Dendritic cell treated with granulocyte-macrophage colony-stimulating factor and Interleukin-4, amounts not matched to agents 40 ng/mL and 50 ng/mL, for 4 days (primary cell): ENCODE measurements at regions of chr13 and their contacts with region 1.

Region 1: DNA sequence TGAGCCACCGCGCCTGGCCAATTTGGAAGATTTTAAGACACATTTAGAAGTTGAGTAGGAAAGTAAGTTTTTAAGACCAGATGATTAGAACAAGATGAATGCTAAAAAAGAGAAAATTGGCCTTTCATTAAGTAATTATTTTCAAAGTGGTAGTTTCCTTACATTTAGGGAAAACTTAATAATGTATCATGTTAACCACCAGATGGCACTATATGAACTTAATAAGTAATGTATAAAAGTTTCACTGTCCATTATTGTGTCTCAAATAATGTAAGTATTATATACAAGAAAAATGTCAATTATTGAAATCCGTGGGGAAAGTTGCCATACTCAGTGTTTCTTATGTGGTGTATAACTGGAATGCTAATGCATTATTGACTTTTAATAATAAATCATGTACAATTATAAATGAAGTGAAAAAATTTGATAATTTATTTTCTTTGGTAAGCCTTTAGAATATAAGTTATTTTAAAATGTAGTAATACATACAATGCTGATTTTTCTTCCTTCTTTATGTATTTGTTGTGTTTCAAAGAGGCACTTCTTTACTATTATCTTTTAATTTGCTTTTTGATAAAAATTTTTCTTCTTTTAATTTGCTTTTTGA is 29.2 kb downstream of the COG6 start:
- H3K4me3 Mint-ChIP-seq: no peak overlapping the region
- H3K27ac Mint-ChIP-seq: no peak overlapping the region
- H3K4me1 Mint-ChIP-seq: peaks cover 6% of the 10 kb centered on the region
- H3K27me3 Mint-ChIP-seq: no peaks in the 10 kb centered on the region

Region 2: DNA sequence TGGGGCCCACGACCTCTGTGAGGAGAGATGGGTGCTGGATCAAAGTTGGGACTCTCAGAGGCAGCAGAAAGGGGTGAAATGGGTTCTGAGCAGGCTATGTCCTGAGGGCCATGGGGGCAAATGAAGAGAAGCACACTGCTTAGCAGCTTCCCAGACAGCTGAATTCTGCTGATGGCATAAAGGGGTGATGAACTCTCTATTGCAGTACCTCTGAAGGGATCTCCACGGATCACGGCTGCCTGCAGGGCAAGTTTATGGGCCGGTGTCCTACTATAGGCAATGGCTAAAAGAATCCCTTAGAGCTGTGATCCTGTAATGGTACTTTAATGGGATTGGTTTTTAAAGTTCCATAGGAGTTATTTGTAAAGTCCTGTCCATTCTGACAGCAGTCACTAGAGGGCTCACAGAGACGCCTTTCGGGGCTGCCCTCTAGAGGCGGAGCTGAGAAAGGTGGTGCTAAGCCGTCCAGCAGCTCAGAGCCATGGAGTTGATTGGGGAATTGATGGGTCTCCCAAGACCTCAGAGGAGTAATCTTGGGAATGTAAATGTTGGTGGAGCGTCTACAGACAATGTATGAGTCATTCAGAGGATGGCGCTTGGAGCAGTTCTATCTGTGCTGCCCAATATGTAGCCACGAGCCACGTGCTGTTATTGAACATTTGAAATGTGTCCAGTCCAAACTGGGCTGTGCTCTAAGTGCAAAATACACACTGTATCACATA is 258.1 kb after region 1 on chr13:
- intact Hi-C with region 1: loop called (anchors 5 kb)
- H3K4me3 Mint-ChIP-seq: no peak overlapping the region
- H3K27ac Mint-ChIP-seq: no peak overlapping the region
- H3K4me1 Mint-ChIP-seq: no peaks in the 10 kb centered on the region
- H3K27me3 Mint-ChIP-seq: no peaks in the 10 kb centered on the region

Region 3: DNA sequence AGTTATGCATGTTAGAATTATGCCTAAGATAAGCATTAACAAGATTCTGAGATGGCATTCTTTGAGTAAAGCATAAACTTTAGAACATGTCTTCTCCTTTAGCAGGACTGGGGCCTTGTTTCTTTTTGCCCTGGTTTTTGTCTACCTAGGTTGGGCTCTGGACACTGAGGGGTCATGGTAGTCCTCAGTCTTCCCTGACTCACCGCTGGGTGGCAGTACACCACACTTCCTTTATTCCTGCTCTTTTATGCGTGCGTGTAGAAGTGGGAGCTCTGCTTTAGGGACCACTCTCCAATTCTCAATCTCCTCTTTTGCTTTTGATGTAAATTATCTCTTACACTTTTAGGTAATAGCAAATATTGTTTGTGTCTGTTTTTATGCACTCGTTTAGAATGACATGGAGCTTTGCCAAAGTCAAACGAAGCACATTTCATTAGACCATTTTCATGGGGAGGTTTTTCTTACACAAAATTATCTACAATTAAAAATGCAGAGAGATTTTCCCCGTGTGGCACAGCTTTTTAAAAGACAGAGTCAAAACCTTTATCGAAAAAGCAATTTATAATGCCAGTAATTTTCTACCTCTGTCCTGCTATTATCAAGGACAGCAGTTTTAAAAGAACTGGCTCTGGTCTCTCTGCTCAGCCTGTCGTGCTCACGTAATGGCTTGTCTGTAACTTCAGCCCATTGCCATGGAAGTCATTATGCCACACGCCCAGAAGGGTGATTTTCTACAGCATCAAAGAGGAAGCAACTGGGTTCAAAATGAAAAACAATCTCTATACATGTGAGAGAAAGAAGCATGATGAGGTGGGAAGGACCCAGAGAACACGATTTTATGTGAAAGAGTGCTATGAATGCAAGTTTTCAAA is 384.8 kb after region 1 on chr13:
- intact Hi-C with region 1: loop called (anchors 10 kb)
- H3K4me3 Mint-ChIP-seq: no peak overlapping the region
- H3K27ac Mint-ChIP-seq: no peak overlapping the region
- H3K4me1 Mint-ChIP-seq: no peaks in the 10 kb centered on the region
- H3K27me3 Mint-ChIP-seq: no peaks in the 10 kb centered on the region

Region 4: DNA sequence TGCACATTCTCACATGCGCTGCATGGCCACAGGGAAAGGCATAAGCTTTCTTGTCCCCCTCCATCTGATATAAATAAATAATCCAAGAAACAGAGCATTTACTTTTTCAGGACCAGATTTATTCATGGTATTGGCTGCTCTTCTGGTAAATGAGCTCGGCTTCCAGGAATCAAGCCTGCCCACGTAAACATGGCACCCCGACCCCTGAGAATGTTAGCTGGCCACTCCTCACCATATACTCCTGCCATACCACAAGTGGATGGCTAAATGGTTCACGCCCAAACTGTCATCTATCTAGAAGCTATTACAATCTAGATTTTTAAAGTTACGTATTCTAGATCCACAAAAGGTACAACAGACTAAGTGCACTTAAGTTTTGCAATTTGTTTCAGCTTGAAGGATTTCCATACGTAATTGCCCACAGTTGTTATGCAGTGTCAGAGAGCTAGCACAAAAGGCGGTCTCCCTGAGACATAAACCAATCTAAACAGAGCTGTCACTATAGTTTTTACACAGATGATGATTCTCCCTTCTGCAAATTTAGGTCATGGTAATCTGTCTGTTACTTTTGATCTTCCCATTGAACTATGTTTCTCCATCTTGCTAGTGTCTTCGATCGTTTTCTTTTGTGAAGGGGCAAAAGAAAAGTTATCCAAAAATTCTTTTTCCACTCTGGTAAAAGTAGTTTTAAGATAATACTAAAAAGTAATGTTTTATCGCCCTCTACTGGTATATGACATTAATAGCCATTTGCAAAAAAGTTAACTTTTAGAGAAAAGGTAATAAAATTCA is 998.0 kb after region 1 on chr13:
- intact Hi-C with region 1: loop called (anchors 2 kb)
- H3K4me3 Mint-ChIP-seq: no peak overlapping the region
- H3K27ac Mint-ChIP-seq: no peak overlapping the region
- H3K4me1 Mint-ChIP-seq: peaks cover 10% of the 10 kb centered on the region
- H3K27me3 Mint-ChIP-seq: peaks cover 8% of the 10 kb centered on the region

Region 5: GRCh38 chr13:40770934-40771618 is 1086.4 kb after region 1 on chr13 and contains the start of gene MRPS31:
- intact Hi-C with region 1: loop called (anchors 10 kb)
- H3K4me3 Mint-ChIP-seq: peak within 1 kb of the TSS; percentile 95
- H3K27ac Mint-ChIP-seq: peak within 1 kb of the TSS; percentile 95
- H3K4me1 Mint-ChIP-seq: peaks cover 13% of the 10 kb centered on the region
- H3K27me3 Mint-ChIP-seq: no peaks in the 10 kb centered on the region